ENCODE measurements at regions of chr19 and their contacts with region 1.

Region 1: GRCh38 chr19:10928525-10929401 is at the starts of genes TIMM29 and YIPF2:
- DNase-seq: peak; percentile 78
- H3K4me3 ChIP-seq: peak within 1 kb of the TSS; percentile 63 to 98 (median 92)
- H3K27ac ChIP-seq: peak within 1 kb of the TSS; percentile 85 to 96 (median 94)
- H3K4me1 ChIP-seq: peaks cover 22 to 47% (median 26%) of the 10 kb centered on the region in 3 donors
- H3K27me3 ChIP-seq: no peaks in the 10 kb centered on the region
- CTCF ChIP-seq: peak in 2 of 6 experiments; percentile 15 to 41
- POLR2A ChIP-seq: peak in 3 of 4 donors; percentile 19 to 61 (median 60)
- total RNA-seq, gene TIMM29: 23.6 to 35.6 (median 27.3) TPM
- total RNA-seq, gene YIPF2: 39.6 to 63.2 (median 44.0) TPM

Region 2: DNA sequence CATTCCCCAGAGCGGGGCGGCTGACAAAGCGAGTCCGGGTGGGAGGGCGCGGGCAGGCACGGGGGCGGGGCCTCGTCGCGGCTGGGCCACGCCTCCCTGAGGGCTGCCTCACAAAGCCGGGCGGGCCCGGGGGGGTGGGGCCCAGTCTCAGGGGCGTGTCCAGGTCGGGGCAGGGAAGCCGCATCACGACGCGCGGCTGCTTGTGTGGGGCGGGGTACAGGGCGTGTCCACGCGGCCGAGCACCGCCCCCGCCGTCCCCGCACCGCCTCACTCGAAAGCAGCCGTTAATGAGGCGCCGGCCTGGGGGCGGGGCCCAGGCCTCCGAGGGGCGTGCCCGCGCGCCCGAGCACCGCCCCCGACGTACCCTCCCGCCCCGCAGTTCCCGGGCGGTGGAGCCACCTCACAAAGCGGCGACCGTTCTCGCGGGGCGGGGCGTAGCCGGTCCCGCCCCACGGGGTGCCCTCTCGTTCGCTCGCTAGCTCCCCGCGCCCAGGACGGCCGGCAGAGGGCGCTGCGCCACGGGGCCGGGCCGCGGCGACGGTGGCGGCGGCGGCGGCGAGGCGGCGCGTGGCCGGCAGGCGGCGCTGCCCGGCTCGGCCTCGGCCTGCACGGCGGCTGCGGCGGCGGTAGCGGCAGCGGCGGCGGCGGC is 57.7 kb before region 1 on chr19 and contains the start of gene CARM1:
- intact Hi-C with region 1: loop called (anchors 5 kb)
- DNase-seq: peak; percentile 94
- H3K4me3 ChIP-seq: peak within 1 kb of the TSS; percentile 88 to 94 (median 92)
- H3K27ac ChIP-seq: peak within 1 kb of the TSS; percentile 92 to 95 (median 93)
- H3K4me1 ChIP-seq: peaks cover 10 to 37% (median 14%) of the 10 kb centered on the region in 3 donors
- H3K27me3 ChIP-seq: no peaks in the 10 kb centered on the region
- CTCF ChIP-seq: peak; percentile 40 to 97 (median 94)
- POLR2A ChIP-seq: no peak
- total RNA-seq, gene CARM1: 21.4 to 35.4 (median 28.5) TPM

Region 3: GRCh38 chr19:10884274-10884673 is 44.5 kb before region 1 on chr19:
- intact Hi-C with region 1: no loop called
- DNase-seq: no peak
- H3K4me3 ChIP-seq: no peak overlapping the region
- H3K27ac ChIP-seq: no peak overlapping the region
- H3K4me1 ChIP-seq: peaks cover 17 to 81% (median 38%) of the 10 kb centered on the region in 3 donors
- H3K27me3 ChIP-seq: no peaks in the 10 kb centered on the region
- CTCF ChIP-seq: no peak
- POLR2A ChIP-seq: no peak

Measured in esophagus squamous epithelium (tissue), 5 donors.